ENCODE measurements at regions of chr6 and their contacts with region 1.

Region 1: GRCh38 chr6:135145063-135145800 is 35.9 kb upstream of the MYB start:
- DNase-seq: no peak
- H3K4me3 ChIP-seq: peak overlapping the region in 1 of 4 donors; percentile 15
- H3K27ac ChIP-seq: no peak overlapping the region
- H3K4me1 ChIP-seq: peaks cover 0 to 11% (median 0%) of the 10 kb centered on the region in 4 donors
- H3K27me3 ChIP-seq: no peaks in the 10 kb centered on the region
- CTCF ChIP-seq: peak; percentile 42 to 75 (median 54)
- EP300 ChIP-seq: no peak
- POLR2A ChIP-seq: no peak

Region 2: GRCh38 chr6:135128268-135128914 is 16.8 kb before region 1 on chr6:
- in situ Hi-C with region 1: no loop called
- intact Hi-C with region 1: no loop called
- DNase-seq: no peak
- H3K4me3 ChIP-seq: no peak overlapping the region
- H3K27ac ChIP-seq: no peak overlapping the region
- H3K4me1 ChIP-seq: no peaks in the 10 kb centered on the region
- H3K27me3 ChIP-seq: no peaks in the 10 kb centered on the region
- CTCF ChIP-seq: no peak
- EP300 ChIP-seq: no peak
- POLR2A ChIP-seq: no peak

Region 3: GRCh38 chr6:135423649-135424128 is 278.5 kb after region 1 on chr6:
- in situ Hi-C with region 1: loop called (anchors 10 to 25 kb)
- intact Hi-C with region 1: no loop called
- DNase-seq: no peak
- H3K4me3 ChIP-seq: no peak overlapping the region
- H3K27ac ChIP-seq: no peak overlapping the region
- H3K4me1 ChIP-seq: peaks cover 0 to 10% (median 0%) of the 10 kb centered on the region in 4 donors
- H3K27me3 ChIP-seq: no peaks in the 10 kb centered on the region
- CTCF ChIP-seq: peak; percentile 46 to 81 (median 62)
- EP300 ChIP-seq: no peak
- POLR2A ChIP-seq: no peak

Region 4: GRCh38 chr6:135438907-135439535 is 293.8 kb after region 1 on chr6:
- in situ Hi-C with region 1: loop called in 2 of 4 experiments (anchors 25 kb)
- intact Hi-C with region 1: no loop called
- DNase-seq: no peak
- H3K4me3 ChIP-seq: no peak overlapping the region
- H3K27ac ChIP-seq: no peak overlapping the region
- H3K4me1 ChIP-seq: peaks cover 0 to 6% (median 0%) of the 10 kb centered on the region in 4 donors
- H3K27me3 ChIP-seq: no peaks in the 10 kb centered on the region
- CTCF ChIP-seq: peak in 4 of 5 experiments; percentile 33 to 47 (median 44)
- EP300 ChIP-seq: no peak
- POLR2A ChIP-seq: no peak

Region 5: DNA sequence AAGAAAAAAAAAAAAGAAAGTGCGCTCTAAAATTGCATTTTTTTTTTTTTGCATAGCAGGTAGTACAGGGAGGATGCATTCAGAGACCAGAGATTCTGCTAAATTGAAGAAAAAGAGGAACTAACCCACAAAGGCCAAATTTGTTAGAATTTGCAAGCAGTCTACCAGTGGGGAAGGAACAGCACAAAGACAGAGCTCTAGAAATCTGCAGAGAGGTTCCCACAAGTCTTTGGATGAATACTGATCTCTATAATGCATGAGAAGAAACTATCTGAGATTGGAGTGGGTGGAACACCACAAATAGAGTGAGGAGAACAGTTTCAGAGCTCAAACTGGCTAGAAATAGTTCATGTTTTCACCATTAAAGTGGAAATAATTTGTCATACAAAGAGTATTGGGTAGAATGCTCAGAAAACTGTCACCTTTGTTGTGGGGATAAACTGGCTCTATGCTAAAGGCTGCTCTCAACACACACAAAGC is 431.9 kb after region 1 on chr6:
- in situ Hi-C with region 1: no loop called
- intact Hi-C with region 1: no loop called
- DNase-seq: no peak
- H3K4me3 ChIP-seq: no peak overlapping the region
- H3K27ac ChIP-seq: no peak overlapping the region
- H3K4me1 ChIP-seq: no peaks in the 10 kb centered on the region
- H3K27me3 ChIP-seq: no peaks in the 10 kb centered on the region
- CTCF ChIP-seq: no peak
- EP300 ChIP-seq: no peak
- POLR2A ChIP-seq: no peak